Body of pancreas (tissue), 4 donors: ENCODE measurements at regions of chr11 and their contacts with region 1.

Region 1: DNA sequence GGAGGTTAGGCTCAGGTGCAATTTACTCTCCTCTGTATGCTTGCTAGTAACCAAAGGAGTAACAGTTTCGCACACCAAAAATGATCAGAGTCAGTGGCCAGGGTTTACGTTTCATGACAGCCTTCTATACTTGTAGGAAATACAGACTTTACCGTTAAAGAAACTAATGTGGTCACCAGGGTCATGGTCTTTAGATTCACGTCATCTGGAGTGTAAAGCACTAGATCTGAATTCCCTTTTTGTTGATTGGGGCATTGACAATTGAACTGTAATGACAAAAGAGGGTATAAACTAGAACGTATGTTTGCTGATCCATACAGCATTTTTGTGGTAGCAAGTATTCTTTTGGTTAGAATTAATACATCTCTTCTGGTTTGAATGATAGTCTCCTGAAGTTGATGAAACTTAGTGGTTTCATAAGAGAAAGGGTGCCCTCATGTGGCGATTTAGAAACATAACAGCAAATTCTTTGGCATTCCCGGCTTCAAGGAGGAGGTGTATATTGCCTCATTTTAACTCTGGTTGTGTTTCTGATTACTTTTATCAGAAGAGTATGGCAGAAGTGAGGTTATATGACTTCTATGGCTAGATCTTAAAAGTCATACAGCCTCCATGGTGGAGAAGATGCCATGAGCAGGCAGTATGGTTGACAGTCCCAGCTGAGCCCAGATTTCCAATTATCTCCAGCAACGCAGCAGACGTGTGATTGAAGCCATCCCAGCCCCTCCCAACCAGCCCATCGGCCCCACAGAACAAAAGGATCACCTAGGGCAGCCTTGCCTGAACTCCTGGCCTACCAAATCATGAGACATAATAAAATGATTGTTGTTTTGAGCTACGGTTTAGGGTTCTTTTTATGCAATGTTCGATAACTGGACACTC is 35.1 kb downstream of the MMP7 start:
- DNase-seq: peak; percentile 39 to 80 (median 56)
- ATAC-seq: peak; percentile 88
- H3K4me3 ChIP-seq: no peak overlapping the region
- H3K27ac ChIP-seq: no peak overlapping the region
- H3K4me1 ChIP-seq: peaks cover 5% of the 10 kb centered on the region
- H3K27me3 ChIP-seq: no peaks in the 10 kb centered on the region
- CTCF ChIP-seq: peak; percentile 37 to 86 (median 80)
- POLR2A ChIP-seq: no peak

Region 2: DNA sequence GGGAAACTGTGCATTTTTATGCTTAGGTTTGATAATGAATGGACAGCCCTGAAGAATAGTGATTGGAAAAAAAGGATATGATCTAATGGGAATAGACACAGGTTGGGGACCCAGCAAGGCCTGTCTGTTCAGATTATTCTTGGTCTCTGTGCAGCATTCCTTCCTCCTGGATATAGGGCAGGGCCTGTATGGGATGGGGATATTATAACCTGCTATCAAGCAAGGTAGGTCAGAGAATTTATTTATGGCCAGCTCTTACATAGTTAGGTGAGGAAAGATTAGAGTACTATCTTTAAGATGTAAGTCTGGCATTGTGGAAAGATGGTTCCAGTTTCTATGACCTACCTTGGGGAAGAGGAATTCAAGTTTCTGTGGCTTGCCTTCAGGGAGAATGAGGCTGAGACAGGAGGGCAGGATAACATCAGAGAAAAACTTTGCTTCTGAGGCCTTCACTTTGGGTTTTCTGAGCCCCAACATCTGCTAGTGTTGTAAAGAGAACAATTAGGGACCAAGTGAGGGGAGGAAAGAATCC is 156.9 kb before region 1 on chr11:
- intact Hi-C with region 1: loop called (anchors 5 kb)
- DNase-seq: no peak
- ATAC-seq: no peak
- H3K4me3 ChIP-seq: no peak overlapping the region
- H3K27ac ChIP-seq: no peak overlapping the region
- H3K4me1 ChIP-seq: no peaks in the 10 kb centered on the region
- H3K27me3 ChIP-seq: no peaks in the 10 kb centered on the region
- CTCF ChIP-seq: no peak
- POLR2A ChIP-seq: no peak

Region 3: DNA sequence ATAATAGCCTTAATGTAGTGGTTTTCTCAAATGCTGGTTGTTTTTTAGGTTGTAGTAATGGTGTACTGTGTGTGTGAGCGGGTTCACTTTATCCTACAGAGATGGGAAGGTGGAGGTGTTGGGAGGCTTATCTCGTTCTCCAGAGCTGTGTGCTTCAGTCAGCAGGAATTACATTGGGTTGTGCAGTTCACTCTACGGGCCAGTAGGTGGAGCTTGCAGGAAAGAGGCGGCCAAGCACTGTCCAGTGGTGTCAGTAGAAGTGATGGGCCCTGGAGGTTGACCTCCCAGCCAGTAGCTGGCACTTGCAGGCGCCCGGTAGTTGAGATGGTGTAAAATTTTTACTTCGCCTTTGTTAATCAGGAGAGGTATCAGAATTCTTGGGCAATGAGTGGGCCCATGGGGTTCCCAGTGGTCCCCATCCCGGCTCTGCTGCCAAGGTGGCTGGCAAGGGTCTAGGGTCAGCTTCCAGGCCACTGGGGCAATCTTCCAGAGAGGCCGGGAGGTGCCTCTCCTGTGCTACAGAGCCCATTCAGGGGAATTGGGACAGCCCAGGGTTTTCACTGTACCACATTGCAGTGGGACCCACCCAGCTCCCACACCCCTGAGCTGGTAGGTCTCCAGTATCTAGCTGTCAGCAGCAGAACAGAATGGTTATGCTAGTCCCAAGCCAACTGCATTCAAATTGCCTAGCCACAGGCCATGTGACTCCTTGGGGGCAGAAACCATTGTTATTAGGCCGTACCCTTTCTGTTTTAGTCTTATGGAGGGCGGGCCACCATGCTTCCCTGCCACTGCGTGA is 104.5 kb before region 1 on chr11:
- intact Hi-C with region 1: loop called (anchors 10 kb)
- DNase-seq: peak; percentile 67 to 75 (median 74)
- ATAC-seq: peak; percentile 92
- H3K4me3 ChIP-seq: no peak overlapping the region
- H3K27ac ChIP-seq: no peak overlapping the region
- H3K4me1 ChIP-seq: peaks cover 4% of the 10 kb centered on the region
- H3K27me3 ChIP-seq: no peaks in the 10 kb centered on the region
- CTCF ChIP-seq: peak; percentile 66 to 92 (median 80)
- POLR2A ChIP-seq: no peak

Region 4: DNA sequence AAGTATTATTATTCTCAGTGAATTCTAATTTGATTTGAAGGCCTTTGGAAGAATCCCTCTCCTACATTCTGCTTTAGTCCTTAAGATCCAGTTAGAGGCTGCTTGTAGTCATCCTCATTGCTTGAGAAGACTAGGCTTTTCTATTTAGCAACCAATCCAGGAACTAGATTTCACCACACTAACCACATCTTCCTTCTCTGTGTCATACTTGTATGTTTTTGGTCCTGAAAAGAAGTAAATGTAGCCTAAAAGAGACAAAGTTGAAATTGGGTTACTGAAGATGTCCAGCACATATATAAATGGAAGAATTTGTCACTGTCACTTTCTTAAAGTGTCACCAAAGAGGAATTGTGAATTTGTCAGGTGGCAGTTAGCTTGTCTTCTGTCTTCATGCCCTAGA is 81.8 kb after region 1 on chr11:
- intact Hi-C with region 1: no loop called
- DNase-seq: no peak
- ATAC-seq: no peak
- H3K4me3 ChIP-seq: no peak overlapping the region
- H3K27ac ChIP-seq: no peak overlapping the region
- H3K4me1 ChIP-seq: no peaks in the 10 kb centered on the region
- H3K27me3 ChIP-seq: no peaks in the 10 kb centered on the region
- CTCF ChIP-seq: no peak
- POLR2A ChIP-seq: no peak